CD8-positive, alpha-beta T cell (primary cell): ENCODE measurements at regions of chr6 and their contacts with region 1.

Region 1: GRCh38 chr6:161370880-161371279 is 97.0 kb upstream of the AGPAT4 start:
- DNase-seq: peak; percentile 35 to 82 (median 67)
- ATAC-seq: peak; percentile 93
- H3K4me3 ChIP-seq: no peak overlapping the region
- H3K4me3 Mint-ChIP-seq: no peak overlapping the region
- H3K27ac ChIP-seq: no peak overlapping the region
- H3K27ac Mint-ChIP-seq: no peak overlapping the region
- H3K4me1 ChIP-seq: no peaks in the 10 kb centered on the region
- H3K4me1 Mint-ChIP-seq: peaks cover 2% of the 10 kb centered on the region
- H3K27me3 ChIP-seq: no peaks in the 10 kb centered on the region
- H3K27me3 Mint-ChIP-seq: no peaks in the 10 kb centered on the region
- CTCF ChIP-seq: peak; percentile 89

Region 2: DNA sequence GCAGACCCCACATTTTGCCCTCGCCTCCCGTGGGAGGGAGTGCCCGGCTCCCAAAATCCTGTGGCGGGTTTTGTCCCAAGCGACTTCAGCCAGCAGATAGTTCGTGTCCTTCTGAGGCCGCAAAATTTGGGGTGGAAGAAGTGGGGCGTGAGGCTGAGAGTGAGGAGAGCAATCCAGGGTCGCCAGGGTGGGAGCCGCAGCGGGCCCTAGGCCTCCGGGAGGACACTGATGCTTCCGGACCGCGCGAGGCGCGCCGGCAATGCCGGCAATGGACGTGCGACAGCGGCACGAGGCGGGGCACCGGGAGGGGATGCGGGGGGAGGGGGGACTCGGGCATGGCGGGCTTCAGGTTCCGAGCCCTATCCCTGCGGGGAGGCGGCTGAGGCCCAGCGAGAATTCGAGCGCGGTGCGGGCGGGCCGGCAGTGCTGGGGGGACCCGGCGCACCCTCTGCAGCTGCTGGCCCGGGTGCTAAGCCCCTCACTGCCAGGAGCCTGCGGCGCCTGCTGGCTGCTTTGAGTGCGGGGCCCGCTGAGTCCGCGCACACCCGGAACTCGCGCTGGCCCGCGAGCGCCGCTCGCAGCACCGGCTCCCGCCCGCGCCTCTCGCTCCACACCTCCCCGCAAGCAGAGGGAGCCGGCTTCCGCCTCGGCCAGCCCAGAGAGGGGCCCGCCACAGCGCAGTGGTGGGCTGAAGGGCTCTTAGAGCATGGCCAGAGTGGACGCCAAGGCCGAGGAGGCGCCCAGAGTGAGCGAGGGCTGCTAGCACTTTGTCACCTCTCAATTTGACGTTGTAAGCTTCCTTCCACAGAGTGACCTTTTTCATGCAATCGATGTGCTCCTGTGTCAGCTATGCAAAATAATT is 850.6 kb before region 1 on chr6:
- CTCF ChIA-PET with region 1: interaction called, 12 read pairs
- POLR2A ChIA-PET with region 1: no interaction called
- intact Hi-C with region 1: loop called in 1 of 2 experiments (anchors 1 kb)
- DNase-seq: peak; percentile 53 to 88 (median 78)
- ATAC-seq: peak; percentile 81
- H3K4me3 ChIP-seq: peak overlapping the region; percentile 69 to 94
- H3K4me3 Mint-ChIP-seq: peak overlapping the region; percentile 96
- H3K27ac ChIP-seq: peak overlapping the region; percentile 67 to 75
- H3K27ac Mint-ChIP-seq: peak overlapping the region; percentile 94
- H3K4me1 ChIP-seq: peaks cover 12% of the 10 kb centered on the region
- H3K4me1 Mint-ChIP-seq: peaks cover 26% of the 10 kb centered on the region
- H3K27me3 ChIP-seq: no peaks in the 10 kb centered on the region
- H3K27me3 Mint-ChIP-seq: peaks cover 2% of the 10 kb centered on the region
- CTCF ChIP-seq: peak; percentile 95

Region 3: DNA sequence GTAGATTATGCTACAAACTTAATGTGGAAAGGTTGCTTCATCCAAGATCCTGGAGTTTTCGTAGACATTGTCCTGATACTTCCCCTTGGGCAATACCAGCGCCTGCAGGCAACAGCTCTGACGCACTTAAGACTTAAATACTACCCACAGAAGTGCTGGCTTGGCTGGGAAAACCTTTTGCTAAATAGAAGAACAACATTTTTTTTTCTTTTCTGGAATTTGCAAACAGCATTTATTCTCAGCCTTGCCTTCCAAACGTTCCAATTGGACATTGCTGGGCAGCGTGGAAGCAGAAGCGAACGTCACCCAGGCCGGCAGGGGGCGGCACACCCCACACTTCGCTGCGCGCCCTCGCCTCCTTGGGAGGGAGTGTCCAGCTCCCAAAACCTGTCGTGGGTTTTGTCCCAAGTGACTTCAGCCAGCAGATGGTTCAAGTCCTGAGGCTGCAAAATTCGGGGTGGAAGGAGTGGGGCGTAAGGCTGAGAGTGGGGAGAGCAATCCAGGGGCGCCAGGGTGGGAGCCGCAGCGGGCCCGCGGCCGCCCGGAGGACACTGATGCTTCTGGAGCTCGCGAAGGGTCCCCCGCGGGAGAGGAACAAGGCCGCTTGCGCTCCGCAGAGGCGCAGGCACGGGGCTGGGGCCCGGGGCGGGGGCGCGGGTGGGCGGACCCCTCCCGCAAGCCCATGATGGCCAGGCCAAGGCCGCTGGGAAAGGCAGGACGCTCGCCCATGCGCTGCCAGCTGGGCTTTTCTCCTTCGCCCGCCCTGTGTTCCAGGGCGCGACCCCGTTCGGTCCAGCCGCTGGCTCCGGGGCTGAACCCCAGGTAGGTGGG is 440.1 kb before region 1 on chr6:
- CTCF ChIA-PET with region 1: interaction called, 288 read pairs
- POLR2A ChIA-PET with region 1: interaction called, 4 read pairs
- intact Hi-C with region 1: loop called in 1 of 2 experiments (anchors 1 kb)
- DNase-seq: peak; percentile 5 to 72 (median 58)
- ATAC-seq: peak; percentile 68
- H3K4me3 ChIP-seq: peak overlapping the region in 1 of 2 experiments; percentile 41
- H3K4me3 Mint-ChIP-seq: peak overlapping the region; percentile 36
- H3K27ac ChIP-seq: no peak overlapping the region
- H3K27ac Mint-ChIP-seq: no peak overlapping the region
- H3K4me1 ChIP-seq: peaks cover 5% of the 10 kb centered on the region
- H3K4me1 Mint-ChIP-seq: peaks cover 5% of the 10 kb centered on the region
- H3K27me3 ChIP-seq: peaks cover 0 to 2% of the 10 kb centered on the region in 2 experiments
- H3K27me3 Mint-ChIP-seq: peaks cover 37% of the 10 kb centered on the region
- CTCF ChIP-seq: peak; percentile 85

Region 4: GRCh38 chr6:161101517-161101916 is 269.4 kb before region 1 on chr6:
- CTCF ChIA-PET with region 1: interaction called, 10 read pairs
- POLR2A ChIA-PET with region 1: no interaction called
- intact Hi-C with region 1: loop called (anchors 1 to 2 kb)
- DNase-seq: peak in 1 of 9 experiments; percentile 23
- ATAC-seq: no peak
- H3K4me3 ChIP-seq: no peak overlapping the region
- H3K4me3 Mint-ChIP-seq: no peak overlapping the region
- H3K27ac ChIP-seq: no peak overlapping the region
- H3K27ac Mint-ChIP-seq: no peak overlapping the region
- H3K4me1 ChIP-seq: no peaks in the 10 kb centered on the region
- H3K4me1 Mint-ChIP-seq: no peaks in the 10 kb centered on the region
- H3K27me3 ChIP-seq: no peaks in the 10 kb centered on the region
- H3K27me3 Mint-ChIP-seq: no peaks in the 10 kb centered on the region
- CTCF ChIP-seq: no peak

Region 5: DNA sequence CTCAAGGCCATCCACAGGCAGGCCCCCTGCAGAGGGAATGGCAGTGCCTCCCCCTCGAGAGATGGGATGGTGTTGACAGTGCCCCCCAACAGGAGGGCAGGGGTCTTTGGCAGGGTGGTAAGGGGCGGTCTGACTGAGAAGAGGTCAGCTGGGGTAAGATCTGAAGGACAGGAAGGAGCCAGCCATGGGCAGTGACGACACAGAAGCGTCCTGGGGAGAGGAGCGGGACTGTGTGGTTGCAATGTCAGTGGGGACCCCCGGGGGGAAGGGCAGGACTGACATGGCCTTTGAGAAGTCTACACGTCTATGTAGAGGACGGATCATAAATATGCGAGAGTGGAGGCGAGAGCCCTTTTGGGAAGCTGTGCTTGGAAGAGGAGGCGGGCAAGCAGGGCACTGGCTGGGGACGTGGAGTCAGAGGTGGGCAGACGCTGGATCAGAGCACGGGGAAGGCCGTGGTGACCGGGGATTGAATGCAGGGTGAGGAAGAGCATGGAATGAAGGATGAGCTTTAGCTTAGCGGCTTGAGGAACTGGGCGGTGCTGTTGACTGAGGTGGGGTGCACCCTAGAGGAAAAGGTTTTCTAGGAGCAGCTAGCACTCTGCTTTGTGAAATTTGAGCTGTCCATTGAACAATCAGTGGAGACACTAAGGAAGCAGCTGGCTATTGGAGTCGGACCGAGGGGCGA is 14.6 kb before region 1 on chr6:
- CTCF ChIA-PET with region 1: interaction called, 14 read pairs
- POLR2A ChIA-PET with region 1: no interaction called
- intact Hi-C with region 1: no loop called
- DNase-seq: no peak
- ATAC-seq: no peak
- H3K4me3 ChIP-seq: no peak overlapping the region
- H3K4me3 Mint-ChIP-seq: no peak overlapping the region
- H3K27ac ChIP-seq: no peak overlapping the region
- H3K27ac Mint-ChIP-seq: no peak overlapping the region
- H3K4me1 ChIP-seq: no peaks in the 10 kb centered on the region
- H3K4me1 Mint-ChIP-seq: peaks cover 3% of the 10 kb centered on the region
- H3K27me3 ChIP-seq: no peaks in the 10 kb centered on the region
- H3K27me3 Mint-ChIP-seq: peaks cover 2% of the 10 kb centered on the region
- CTCF ChIP-seq: no peak

Region 6: DNA sequence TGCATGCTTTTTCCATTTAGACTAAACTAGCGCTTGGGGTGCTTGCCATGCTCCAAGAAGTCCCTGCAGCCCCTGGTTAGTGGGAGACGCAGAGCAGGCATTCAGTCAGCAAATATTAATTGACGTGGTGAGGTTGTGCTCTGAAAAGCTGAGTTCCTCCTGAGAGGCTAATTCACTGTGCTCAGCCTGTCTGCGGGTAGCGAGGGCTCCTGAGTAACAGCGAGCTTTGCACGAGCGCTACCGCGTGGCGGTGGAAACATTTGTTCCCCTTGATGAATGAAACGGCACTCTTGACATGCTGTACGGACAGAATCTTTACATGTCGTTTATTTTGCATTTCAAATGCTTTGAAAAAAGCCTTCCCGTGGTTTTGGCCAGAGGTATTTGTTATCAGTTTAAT is 73.6 kb after region 1 on chr6:
- CTCF ChIA-PET with region 1: no interaction called
- POLR2A ChIA-PET with region 1: no interaction called
- intact Hi-C with region 1: no loop called
- DNase-seq: peak in 1 of 9 experiments; percentile 3
- ATAC-seq: no peak
- H3K4me3 ChIP-seq: no peak overlapping the region
- H3K4me3 Mint-ChIP-seq: no peak overlapping the region
- H3K27ac ChIP-seq: no peak overlapping the region
- H3K27ac Mint-ChIP-seq: no peak overlapping the region
- H3K4me1 ChIP-seq: no peaks in the 10 kb centered on the region
- H3K4me1 Mint-ChIP-seq: no peaks in the 10 kb centered on the region
- H3K27me3 ChIP-seq: no peaks in the 10 kb centered on the region
- H3K27me3 Mint-ChIP-seq: no peaks in the 10 kb centered on the region
- CTCF ChIP-seq: no peak